Psoas muscle (tissue), 8 donors: ENCODE measurements at regions of chr3 and their contacts with region 1.

Region 1: DNA sequence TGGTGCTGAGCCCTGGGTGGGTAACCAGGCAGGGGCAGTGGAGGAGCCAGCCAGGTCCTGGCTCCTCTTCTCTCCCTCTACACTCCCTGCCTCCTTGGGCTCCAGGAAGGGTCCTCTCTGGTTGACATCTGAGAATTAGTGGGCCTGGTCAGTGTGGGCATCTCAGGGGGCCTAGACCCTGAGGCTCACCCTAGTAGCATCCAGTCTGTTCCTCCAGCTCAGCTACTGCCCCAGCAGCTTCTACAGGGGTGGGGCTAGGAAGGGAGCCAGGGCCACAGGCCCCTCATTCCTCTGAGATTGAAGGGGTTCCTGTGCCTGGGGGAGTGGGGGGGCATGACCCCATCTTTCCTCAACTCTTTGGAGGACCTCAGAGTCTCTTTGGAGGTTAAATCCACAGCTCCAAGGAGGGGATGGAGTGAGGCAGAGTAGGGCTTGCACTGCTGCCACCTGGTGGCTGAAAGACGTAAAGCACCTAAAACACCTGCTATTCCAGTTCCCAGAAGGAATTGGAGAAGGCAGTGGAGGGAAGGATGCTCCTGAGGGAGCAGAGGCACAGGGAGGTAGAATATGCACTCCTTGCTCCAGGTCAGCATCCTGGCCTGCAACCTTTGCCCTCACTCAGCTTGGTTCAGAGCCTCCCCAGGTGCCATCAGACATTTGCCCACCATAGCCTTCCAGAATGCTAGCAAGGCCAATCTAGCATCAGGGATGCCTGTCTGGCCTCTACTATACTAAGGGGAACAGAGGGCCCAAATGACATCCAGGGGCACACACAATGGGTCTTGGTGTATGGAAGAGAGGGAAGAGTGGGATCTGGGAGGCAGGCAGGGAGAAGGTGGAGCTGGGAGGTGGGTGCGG is 25.1 kb downstream of the C3orf18 start:
- DNase-seq: peak; percentile 57 to 73
- ATAC-seq: peak; percentile 72 to 93 (median 86)
- H3K4me3 ChIP-seq: no peak overlapping the region
- H3K27ac ChIP-seq: no peak overlapping the region
- H3K4me1 ChIP-seq: no peaks in the 10 kb centered on the region
- H3K27me3 ChIP-seq: no peaks in the 10 kb centered on the region
- CTCF ChIP-seq: peak; percentile 94

Region 2: GRCh38 chr3:50260027-50260941 is 282.1 kb before region 1 on chr3:
- intact Hi-C with region 1: loop called in 1 of 2 experiments (anchors 10 kb)
- DNase-seq: peak; percentile 95 to 96
- ATAC-seq: peak; percentile 93 to 97 (median 94)
- H3K4me3 ChIP-seq: peak overlapping the region; percentile 80
- H3K27ac ChIP-seq: peak overlapping the region; percentile 98
- H3K4me1 ChIP-seq: peaks cover 22% of the 10 kb centered on the region
- H3K27me3 ChIP-seq: no peaks in the 10 kb centered on the region
- CTCF ChIP-seq: peak; percentile 98

Region 3: DNA sequence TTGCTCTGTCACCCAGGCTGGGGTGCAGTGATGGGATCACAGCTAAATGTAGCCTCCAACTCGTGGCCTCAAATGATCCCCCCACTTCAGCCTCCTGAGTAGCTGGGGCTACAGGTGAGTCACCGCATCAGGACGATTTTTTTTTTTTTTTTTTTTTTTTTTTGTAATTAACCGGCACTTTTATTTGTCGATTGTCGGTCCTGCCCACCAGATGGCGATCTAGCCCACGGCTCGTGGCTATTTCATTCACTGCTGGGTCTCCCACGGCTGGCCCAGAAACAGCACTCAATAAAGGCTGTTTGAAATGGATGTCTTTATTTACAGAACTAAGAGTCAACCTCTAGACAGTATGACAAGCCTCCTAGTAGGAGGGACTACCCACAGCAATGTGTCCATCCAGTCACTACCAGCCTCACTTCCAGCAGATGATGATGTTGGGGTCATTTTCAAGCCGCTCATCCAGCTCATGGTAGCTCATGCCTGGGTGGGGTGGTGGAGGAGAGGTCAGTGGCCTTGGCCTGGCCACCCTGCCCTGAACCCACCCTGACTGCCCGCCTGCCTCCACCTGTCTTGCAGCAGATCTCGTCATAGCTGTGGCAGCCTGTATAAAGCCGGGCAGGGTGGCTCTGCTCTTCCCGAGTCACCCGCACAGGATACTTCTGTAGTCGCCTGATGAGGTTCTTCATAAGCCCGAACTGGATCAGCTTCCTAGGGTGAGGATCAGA is 195.1 kb before region 1 on chr3:
- intact Hi-C with region 1: loop called (anchors 2 kb)
- DNase-seq: peak; percentile 69 to 83
- ATAC-seq: peak in 1 of 4 donors; percentile 10
- H3K4me3 ChIP-seq: no peak overlapping the region
- H3K27ac ChIP-seq: no peak overlapping the region
- H3K4me1 ChIP-seq: peaks cover 27% of the 10 kb centered on the region
- H3K27me3 ChIP-seq: no peaks in the 10 kb centered on the region
- CTCF ChIP-seq: peak; percentile 61

Region 4: GRCh38 chr3:50436114-50436674 is 106.2 kb before region 1 on chr3:
- intact Hi-C with region 1: loop called (anchors 1 to 5 kb)
- DNase-seq: peak; percentile 51 to 78
- ATAC-seq: peak; percentile 73 to 88 (median 84)
- H3K4me3 ChIP-seq: no peak overlapping the region
- H3K27ac ChIP-seq: no peak overlapping the region
- H3K4me1 ChIP-seq: peaks cover 3% of the 10 kb centered on the region
- H3K27me3 ChIP-seq: no peaks in the 10 kb centered on the region
- CTCF ChIP-seq: peak; percentile 81

Region 5: GRCh38 chr3:50519471-50520089 is 22.8 kb before region 1 on chr3:
- intact Hi-C with region 1: loop called in 1 of 2 experiments (anchors 2 kb)
- DNase-seq: peak; percentile 60 to 73
- ATAC-seq: peak; percentile 73 to 85 (median 82)
- H3K4me3 ChIP-seq: no peak overlapping the region
- H3K27ac ChIP-seq: no peak overlapping the region
- H3K4me1 ChIP-seq: no peaks in the 10 kb centered on the region
- H3K27me3 ChIP-seq: no peaks in the 10 kb centered on the region
- CTCF ChIP-seq: peak; percentile 86

Region 6: DNA sequence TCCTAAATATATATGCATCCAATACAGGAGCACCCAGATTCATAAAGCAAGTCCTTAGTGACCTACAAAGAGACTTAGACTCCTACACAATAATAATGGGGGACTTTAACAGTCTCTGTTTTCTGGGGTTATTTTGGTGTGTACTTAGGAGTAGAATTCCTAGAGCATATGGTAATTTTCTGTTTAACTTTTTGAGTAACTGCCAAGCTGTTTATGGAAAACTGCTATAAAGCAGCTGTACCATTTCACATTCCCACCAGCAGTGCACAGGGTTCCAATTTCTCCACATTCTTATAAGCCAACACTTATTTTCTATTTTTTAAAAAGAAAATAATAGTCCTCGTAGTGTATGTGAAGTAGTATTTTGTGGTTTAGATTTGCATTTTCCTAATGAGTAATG is 201.2 kb after region 1 on chr3:
- intact Hi-C with region 1: no loop called
- DNase-seq: no peak
- ATAC-seq: no peak
- H3K4me3 ChIP-seq: no peak overlapping the region
- H3K27ac ChIP-seq: no peak overlapping the region
- H3K4me1 ChIP-seq: no peaks in the 10 kb centered on the region
- H3K27me3 ChIP-seq: no peaks in the 10 kb centered on the region
- CTCF ChIP-seq: no peak